ENCODE measurements at regions of chr18 and their contacts with region 1.

Region 1: GRCh38 chr18:21218630-21219261 is 23.3 kb upstream of the GREB1L start:
- DNase-seq: no peak
- H3K4me3 ChIP-seq: no peak overlapping the region
- H3K27ac ChIP-seq: no peak overlapping the region
- H3K4me1 ChIP-seq: no peaks in the 10 kb centered on the region
- H3K27me3 ChIP-seq: no peaks in the 10 kb centered on the region
- CTCF ChIP-seq: no peak
- EP300 ChIP-seq: no peak
- POLR2A ChIP-seq: no peak

Region 2: DNA sequence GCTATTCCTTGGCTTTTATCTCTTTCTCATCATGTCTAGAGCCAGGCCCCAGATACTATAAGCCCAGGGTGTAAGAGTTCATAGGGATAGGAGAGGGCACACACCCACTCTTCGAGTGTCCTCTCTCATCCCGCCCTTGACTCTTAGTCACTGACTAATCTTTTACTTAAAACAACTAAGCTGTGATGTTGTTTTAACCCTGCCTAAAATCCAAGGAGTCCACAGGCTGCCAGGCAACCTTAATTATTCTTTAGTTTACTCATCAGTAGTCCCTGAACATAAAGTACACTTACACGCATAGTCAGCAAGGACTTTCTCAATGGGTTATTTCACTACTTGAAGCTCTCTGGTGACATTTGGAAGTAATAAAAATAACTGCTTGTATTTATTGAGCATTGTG is 51.7 kb after region 1 on chr18:
- in situ Hi-C with region 1: loop called in 1 of 4 experiments (anchors 10 kb)
- intact Hi-C with region 1: no loop called
- DNase-seq: no peak
- H3K4me3 ChIP-seq: no peak overlapping the region
- H3K27ac ChIP-seq: no peak overlapping the region
- H3K4me1 ChIP-seq: no peaks in the 10 kb centered on the region
- H3K27me3 ChIP-seq: no peaks in the 10 kb centered on the region
- CTCF ChIP-seq: no peak
- EP300 ChIP-seq: no peak
- POLR2A ChIP-seq: no peak

Region 3: DNA sequence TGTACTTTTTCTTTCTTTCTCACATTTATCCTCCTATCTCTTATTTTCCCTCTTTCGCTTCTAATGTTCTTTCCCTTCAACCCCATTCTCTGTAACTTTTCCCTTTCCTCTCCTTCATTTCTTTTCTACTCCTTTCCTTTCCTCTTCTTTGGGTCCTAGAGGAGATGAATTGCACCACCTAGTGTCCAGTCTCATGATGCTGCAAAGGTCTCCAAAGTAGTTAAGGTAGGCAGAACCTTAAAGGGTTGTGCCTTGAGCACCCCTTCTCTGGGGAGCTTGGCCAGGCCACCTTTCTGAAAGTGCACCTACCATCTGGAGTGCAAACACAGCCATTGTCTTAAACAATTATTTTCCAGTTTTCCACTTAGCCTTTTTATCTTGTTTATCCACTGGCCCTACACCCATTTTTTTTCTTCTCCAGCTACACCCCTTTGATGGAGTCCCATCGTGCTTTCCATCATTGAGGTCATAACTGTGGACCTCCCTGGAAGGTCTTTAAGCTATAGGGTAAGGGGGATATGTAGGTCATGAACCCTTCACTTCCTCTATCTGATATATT is 225.8 kb after region 1 on chr18:
- in situ Hi-C with region 1: loop called in 1 of 4 experiments (anchors 25 kb)
- intact Hi-C with region 1: no loop called
- DNase-seq: peak; percentile 11
- H3K4me3 ChIP-seq: no peak overlapping the region
- H3K27ac ChIP-seq: no peak overlapping the region
- H3K4me1 ChIP-seq: no peaks in the 10 kb centered on the region
- H3K27me3 ChIP-seq: no peaks in the 10 kb centered on the region
- CTCF ChIP-seq: peak; percentile 49 to 59 (median 55)
- EP300 ChIP-seq: no peak
- POLR2A ChIP-seq: no peak